Heart right ventricle (tissue), 16 donors: ENCODE measurements at regions of chr3 and their contacts with region 1.

Region 1: GRCh38 chr3:182729903-182730674 is 63.2 kb upstream of the ATP11B start:
- DNase-seq: no peak
- ATAC-seq: no peak
- H3K4me3 ChIP-seq: no peak overlapping the region
- H3K27ac ChIP-seq: no peak overlapping the region
- H3K4me1 ChIP-seq: peaks cover 0 to 6% (median 0%) of the 10 kb centered on the region in 9 donors
- H3K27me3 ChIP-seq: peaks cover 0 to 30% (median 0%) of the 10 kb centered on the region in 7 donors
- CTCF ChIP-seq: no peak

Region 2: DNA sequence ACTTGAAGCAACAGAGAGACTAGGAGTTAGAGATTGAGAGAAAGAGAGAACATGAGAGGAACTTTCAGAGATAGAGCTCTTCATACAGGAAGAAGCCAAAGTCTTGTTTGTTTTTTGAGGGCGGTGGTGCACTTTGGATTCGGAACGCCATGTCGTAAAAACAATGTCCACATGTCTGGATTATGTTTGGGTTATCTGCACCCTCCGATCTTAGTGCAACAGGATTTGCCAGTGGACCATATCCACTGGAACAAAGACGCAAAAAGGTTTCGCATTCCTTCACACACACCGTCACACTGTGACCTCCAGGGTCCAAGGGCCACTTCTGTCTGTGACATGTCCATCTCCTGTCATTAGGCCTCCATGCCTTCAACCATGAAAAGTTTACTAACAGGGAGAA is 78.6 kb before region 1 on chr3:
- intact Hi-C with region 1: no loop called
- DNase-seq: no peak
- ATAC-seq: no peak
- H3K4me3 ChIP-seq: no peak overlapping the region
- H3K27ac ChIP-seq: no peak overlapping the region
- H3K4me1 ChIP-seq: no peaks in the 10 kb centered on the region
- H3K27me3 ChIP-seq: peaks cover 0 to 11% (median 4%) of the 10 kb centered on the region in 7 donors
- CTCF ChIP-seq: no peak

Region 3: GRCh38 chr3:182769673-182770072 is 39.6 kb after region 1 on chr3:
- intact Hi-C with region 1: loop called in 1 of 10 experiments (anchors 10 kb)
- DNase-seq: no peak
- ATAC-seq: no peak
- H3K4me3 ChIP-seq: no peak overlapping the region
- H3K27ac ChIP-seq: no peak overlapping the region
- H3K4me1 ChIP-seq: no peaks in the 10 kb centered on the region
- H3K27me3 ChIP-seq: peaks cover 0 to 4% (median 0%) of the 10 kb centered on the region in 7 donors
- CTCF ChIP-seq: no peak